HEK293T (cell line): ENCODE measurements at regions of chr9 and their contacts with region 1.

Region 1: GRCh38 chr9:33623658-33624586 is 99.9 kb downstream of the ANKRD18B start:
- DNase-seq: peak; percentile 81

Region 2: GRCh38 chr9:33703430-33704102 is 79.6 kb after region 1 on chr9:
- CTCF ChIA-PET with region 1: interaction called, 10 read pairs
- POLR2A ChIA-PET with region 1: no interaction called
- DNase-seq: no peak

Region 3: DNA sequence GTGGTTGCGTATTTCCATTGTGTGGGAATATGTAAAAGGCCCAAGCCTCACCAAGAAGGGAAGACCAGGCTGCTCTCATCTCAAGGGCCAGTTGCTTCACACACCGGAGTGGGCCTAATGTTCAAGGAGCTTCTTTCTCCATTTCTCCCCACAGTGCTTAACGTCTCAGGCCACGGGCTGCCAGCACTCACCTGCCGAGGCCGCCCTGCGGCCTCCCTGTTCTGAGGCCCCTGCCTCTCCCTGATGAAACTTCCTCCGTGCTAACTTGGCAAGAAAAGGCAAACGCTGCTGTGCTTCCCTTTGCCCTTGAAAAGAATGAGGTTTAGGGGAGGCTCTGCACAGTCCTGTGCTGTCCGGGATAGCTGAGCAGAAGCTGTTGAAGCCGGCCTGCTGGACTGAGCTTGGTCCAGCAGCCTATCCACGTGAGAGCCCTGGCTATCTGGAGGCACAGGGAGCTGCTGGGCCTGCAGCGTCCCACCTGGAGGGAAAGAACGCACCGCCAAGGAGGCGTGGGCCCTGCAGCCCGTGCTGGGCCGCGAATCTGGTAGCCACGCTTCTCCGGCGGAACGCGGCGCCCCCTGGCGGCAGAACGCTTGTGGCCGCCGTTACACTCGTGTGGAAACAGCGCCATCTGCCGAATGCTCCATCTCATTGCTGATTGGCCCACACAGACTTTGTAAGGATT is 97.9 kb after region 1 on chr9:
- CTCF ChIA-PET with region 1: interaction called, 37 read pairs
- POLR2A ChIA-PET with region 1: interaction called, 4 read pairs
- DNase-seq: peak; percentile 72